ENCODE measurements at regions of chr6 and their contacts with region 1.

Region 1: GRCh38 chr6:111823831-111824607 is 49.2 kb downstream of the FYN start:
- DNase-seq: peak; percentile 44
- H3K4me3 Mint-ChIP-seq: peak overlapping the region; percentile 21
- H3K27ac Mint-ChIP-seq: peak overlapping the region; percentile 91
- H3K4me1 Mint-ChIP-seq: peaks cover 80% of the 10 kb centered on the region
- H3K27me3 Mint-ChIP-seq: no peaks in the 10 kb centered on the region

Region 2: DNA sequence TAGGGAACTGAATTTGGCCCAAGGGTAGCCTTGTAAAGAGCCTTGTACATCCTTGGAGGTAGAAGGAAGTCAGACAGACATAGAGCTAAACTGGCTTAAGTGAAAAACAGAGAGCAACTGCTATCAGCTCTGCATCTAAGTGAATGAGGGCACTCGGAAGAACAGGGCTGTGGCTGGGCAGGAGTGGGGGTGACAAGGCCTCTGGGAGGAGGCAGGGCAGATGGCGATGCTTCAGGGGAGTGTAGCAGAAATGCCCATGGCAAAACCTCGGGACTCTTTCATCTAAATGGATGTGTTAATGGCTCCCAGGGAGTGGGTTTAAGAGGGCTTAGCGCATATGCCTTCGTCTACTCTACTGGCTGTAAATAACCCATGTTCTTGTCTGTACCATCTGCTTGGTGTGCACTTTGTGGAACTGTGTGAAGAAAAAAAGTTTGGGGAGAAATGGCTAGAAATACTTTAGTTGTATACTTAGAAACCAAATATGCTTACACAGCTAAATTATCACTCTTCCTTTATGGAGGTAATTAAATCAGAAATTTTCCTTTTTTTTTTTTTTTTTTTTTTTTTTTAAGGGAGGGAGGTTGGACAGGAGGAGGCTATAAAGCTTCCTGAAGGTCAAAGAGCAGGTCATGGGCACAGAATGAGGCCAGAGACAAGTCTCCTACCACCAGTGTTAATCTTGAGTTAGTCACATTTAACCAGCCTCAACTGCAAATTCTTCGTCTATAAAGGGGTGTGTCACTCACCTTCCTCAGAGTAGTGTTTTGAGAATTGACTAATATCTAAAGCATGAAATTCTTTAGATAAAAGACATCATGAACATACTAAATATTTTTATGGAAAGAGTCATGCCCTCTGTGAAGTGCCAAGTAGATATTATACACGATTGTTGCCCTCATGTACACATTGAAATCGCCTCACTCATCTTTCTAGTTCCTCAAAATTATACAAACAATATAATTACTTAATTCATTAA is 11.7 kb before region 1 on chr6:
- CTCF ChIA-PET with region 1: interaction called, 15 read pairs
- POLR2A ChIA-PET with region 1: interaction called, 24 read pairs
- intact Hi-C with region 1: loop called (anchors 1 kb)
- DNase-seq: peak; percentile 15
- H3K4me3 Mint-ChIP-seq: no peak overlapping the region
- H3K27ac Mint-ChIP-seq: peak overlapping the region; percentile 89
- H3K4me1 Mint-ChIP-seq: peaks cover 84% of the 10 kb centered on the region
- H3K27me3 Mint-ChIP-seq: no peaks in the 10 kb centered on the region

Measured in activated CD4-positive, alpha-beta memory T cell treated with anti-CD3 and anti-CD28 coated beads for 36 hours (primary cell).